ENCODE measurements at regions of chr2 and their contacts with region 1.

Region 1: DNA sequence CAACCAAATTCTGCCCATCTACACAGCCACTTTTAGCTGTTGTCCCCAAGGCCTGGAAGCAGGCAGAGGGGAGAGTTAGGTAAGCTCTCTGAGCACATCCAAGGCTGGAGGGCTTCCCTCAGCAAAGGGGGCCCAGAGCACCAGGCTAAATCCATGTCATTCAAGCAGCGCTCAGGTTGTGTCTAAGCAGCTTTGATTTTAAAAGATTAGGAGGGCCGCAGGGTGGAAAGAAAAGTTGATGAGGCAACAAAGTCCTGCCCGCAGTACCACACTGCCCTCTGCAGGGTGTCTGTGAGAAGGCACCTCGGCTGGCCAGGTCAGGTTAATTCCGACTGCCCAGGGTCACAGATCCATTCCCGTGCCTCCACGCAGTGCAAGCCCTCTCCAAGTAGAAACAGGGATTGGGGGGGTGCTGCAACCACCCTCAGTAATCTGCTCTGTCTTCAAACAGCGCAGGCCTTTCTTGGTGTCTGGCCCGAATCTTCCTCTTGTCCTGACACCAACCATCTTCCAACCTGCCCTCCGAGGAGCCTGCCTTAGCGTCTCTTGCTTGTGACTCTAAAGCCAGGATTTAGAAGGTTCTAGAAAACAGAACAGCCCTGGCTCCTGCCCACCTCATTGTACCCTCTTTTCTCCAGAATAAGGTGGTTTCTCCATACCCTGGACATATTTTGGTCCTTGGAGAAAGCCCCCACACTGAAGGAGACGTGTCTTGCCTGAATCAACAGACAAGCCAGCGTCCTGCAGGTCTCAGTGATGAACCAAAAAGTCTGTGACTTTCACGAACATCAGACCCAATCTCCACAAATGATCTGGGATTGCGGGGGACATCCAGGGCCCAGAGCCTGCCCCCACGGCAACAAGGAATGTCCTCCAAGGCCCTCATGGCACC is 289.2 kb downstream of the TNS1 start:
- DNase-seq: peak; percentile 72
- ATAC-seq: peak; percentile 83
- H3K4me3 ChIP-seq: no peak overlapping the region
- H3K27ac ChIP-seq: peak overlapping the region; percentile 93
- H3K4me1 ChIP-seq: peaks cover 35% of the 10 kb centered on the region
- H3K27me3 ChIP-seq: no peaks in the 10 kb centered on the region
- CTCF ChIP-seq: peak; percentile 97
- POLR2A ChIP-seq: peak; percentile 54; the same call in 1 of the 2 replicates
- RAD21 ChIP-seq: peak; percentile 99

Region 2: GRCh38 chr2:217105733-217106649 is 607.6 kb before region 1 on chr2:
- CTCF ChIA-PET with region 1: interaction called, 3 read pairs
- POLR2A ChIA-PET with region 1: no interaction called
- dilution Hi-C with region 1: no loop called
- in situ Hi-C with region 1: no loop called
- intact Hi-C with region 1: loop called (anchors 5 kb)
- DNase-seq: peak; percentile 95
- ATAC-seq: peak; percentile 86
- H3K4me3 ChIP-seq: no peak overlapping the region
- H3K27ac ChIP-seq: peak overlapping the region; percentile 99
- H3K4me1 ChIP-seq: peaks cover 23% of the 10 kb centered on the region
- H3K27me3 ChIP-seq: no peaks in the 10 kb centered on the region
- CTCF ChIP-seq: no peak
- POLR2A ChIP-seq: peak; percentile 68; the same call in 1 of the 2 replicates
- RAD21 ChIP-seq: peak; percentile 11; the same call in 1 of the 2 replicates

Region 3: DNA sequence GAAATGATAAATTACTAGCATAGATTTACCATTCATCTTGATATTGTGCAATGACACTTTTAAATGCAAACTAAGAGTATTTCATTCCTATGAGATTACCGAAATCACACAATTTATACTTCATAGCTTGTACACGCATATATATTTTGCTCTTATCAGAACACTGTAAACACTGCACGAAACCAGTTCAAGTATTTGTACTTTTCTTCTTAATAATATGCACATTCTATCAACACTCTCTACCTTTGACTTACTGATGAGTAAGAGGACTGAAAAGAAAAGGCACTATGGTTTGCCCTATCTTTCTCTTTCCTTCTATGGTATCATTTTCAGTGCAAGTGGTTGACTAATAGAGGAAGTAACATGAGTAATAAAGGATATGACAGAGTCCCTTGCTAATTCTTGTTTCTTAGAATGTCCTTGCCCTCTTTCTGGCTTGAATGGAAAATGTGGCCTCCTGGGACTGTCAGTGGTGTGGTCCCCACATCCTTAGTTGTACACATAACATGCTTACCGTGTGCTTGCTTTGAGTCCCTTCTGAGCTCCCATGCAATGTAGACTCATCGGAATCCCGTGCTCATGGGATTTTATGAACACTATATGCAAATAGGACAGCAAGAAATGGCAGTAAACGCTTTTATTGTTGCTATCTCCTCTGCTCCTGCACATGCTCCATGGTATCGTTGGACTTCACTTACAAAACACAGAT is 490.3 kb before region 1 on chr2:
- CTCF ChIA-PET with region 1: interaction called, 3 read pairs
- POLR2A ChIA-PET with region 1: no interaction called
- dilution Hi-C with region 1: no loop called
- in situ Hi-C with region 1: no loop called
- intact Hi-C with region 1: loop called (anchors 1 kb)
- DNase-seq: peak; percentile 99
- ATAC-seq: peak; percentile 85
- H3K4me3 ChIP-seq: no peak overlapping the region
- H3K27ac ChIP-seq: peak overlapping the region; percentile 99
- H3K4me1 ChIP-seq: peaks cover 35% of the 10 kb centered on the region
- H3K27me3 ChIP-seq: no peaks in the 10 kb centered on the region
- CTCF ChIP-seq: no peak
- POLR2A ChIP-seq: no peak
- RAD21 ChIP-seq: peak; percentile 28

Region 4: DNA sequence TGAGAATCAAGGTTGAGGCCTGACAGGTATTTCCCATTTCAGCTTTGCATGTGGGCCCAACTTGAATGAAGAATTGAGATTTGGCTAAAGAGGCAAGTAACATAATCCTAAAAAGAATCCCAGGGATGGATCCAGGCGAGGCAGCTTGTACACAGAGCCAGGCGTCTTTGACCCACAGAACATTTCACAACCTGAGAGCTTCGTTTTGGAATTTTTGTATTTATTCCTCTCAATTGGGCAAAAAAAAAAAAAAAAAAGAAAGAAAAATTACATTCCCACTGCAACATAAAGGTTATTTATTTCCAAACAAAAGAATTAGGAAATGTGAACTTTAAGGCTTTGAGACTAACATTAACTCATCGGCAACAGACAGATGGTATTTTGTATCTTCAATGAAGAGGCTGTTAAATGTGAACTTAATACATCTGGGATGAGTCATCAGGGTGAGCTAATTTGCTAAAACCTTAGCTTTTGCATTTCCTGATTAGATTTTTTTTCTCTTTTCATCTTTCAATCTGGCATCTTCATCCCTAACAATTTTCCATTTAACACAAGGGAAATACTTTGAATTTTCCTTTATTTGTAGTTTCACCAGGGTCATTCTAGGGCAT is 375.2 kb before region 1 on chr2:
- CTCF ChIA-PET with region 1: no interaction called
- POLR2A ChIA-PET with region 1: no interaction called
- dilution Hi-C with region 1: no loop called
- in situ Hi-C with region 1: no loop called
- intact Hi-C with region 1: loop called (anchors 2 kb)
- DNase-seq: peak; percentile 96
- ATAC-seq: peak; percentile 73
- H3K4me3 ChIP-seq: no peak overlapping the region
- H3K27ac ChIP-seq: peak overlapping the region; percentile 100
- H3K4me1 ChIP-seq: peaks cover 12% of the 10 kb centered on the region
- H3K27me3 ChIP-seq: no peaks in the 10 kb centered on the region
- CTCF ChIP-seq: no peak
- POLR2A ChIP-seq: no peak
- RAD21 ChIP-seq: no peak

Region 5: GRCh38 chr2:217622205-217623060 is 91.2 kb before region 1 on chr2:
- CTCF ChIA-PET with region 1: interaction called, 3 read pairs
- POLR2A ChIA-PET with region 1: interaction called, 6 read pairs
- dilution Hi-C with region 1: no loop called
- in situ Hi-C with region 1: no loop called
- intact Hi-C with region 1: loop called (anchors 2 kb)
- DNase-seq: peak; percentile 98
- ATAC-seq: peak; percentile 90
- H3K4me3 ChIP-seq: no peak overlapping the region
- H3K27ac ChIP-seq: peak overlapping the region; percentile 68
- H3K4me1 ChIP-seq: peaks cover 27% of the 10 kb centered on the region
- H3K27me3 ChIP-seq: no peaks in the 10 kb centered on the region
- CTCF ChIP-seq: no peak
- POLR2A ChIP-seq: no peak
- RAD21 ChIP-seq: no peak

Measured in IMR-90 (cell line).